ENCODE measurements at regions of chr13 and their contacts with region 1.

Region 1: DNA sequence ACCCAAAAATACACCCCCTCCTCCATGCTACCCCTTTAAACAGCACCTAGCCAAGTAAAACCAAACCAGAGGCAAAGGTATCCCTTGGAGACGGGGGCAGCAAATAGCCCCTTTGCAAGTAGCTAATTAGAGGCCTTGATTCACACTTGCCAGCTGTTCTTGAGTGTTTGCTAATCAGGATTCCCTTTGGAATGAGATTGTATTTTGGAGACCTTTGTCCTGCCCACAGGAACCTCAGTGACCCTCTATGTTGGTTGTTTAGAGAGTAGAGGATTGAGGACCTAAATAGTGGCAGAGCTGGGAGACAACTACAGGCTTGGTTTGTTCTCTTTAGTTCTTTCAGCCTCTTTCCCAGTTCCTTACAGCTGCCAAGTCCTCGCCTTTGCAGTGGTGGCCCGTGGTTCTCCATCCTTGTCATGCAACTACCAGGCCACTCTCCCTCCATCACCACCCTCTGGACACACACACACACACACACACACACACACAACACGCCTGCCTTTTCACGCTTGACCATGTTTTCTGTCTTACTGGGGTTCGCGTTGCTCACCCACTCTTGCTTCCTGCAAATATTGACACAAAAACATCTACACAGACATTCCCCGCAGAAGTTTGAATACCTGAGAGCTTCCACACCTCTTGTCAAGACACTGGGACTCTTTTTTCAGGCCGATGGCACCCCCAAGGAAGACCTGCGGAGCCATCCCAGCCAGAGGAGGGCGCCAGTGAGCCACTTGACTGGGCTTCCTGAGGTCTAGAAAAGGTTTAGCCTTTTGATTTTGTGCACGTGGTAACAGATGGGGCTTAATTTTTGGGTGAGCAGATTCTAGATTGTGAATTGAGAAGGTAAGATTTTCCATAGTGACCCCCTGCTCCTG is 80.0 kb upstream of the GPR183 start:
- DNase-seq: peak; percentile 78 to 84 (median 81)
- H3K4me3 ChIP-seq: no peak overlapping the region
- H3K4me3 Mint-ChIP-seq: peak overlapping the region; percentile 4 to 73 (median 54)
- H3K27ac ChIP-seq: peak overlapping the region; percentile 30
- H3K27ac Mint-ChIP-seq: peak overlapping the region; percentile 92 to 99 (median 96)
- H3K4me1 ChIP-seq: peaks cover 65% of the 10 kb centered on the region
- H3K4me1 Mint-ChIP-seq: peaks cover 46 to 70% (median 60%) of the 10 kb centered on the region in 4 donors
- H3K27me3 ChIP-seq: no peaks in the 10 kb centered on the region
- H3K27me3 Mint-ChIP-seq: no peaks in the 10 kb centered on the region

Region 2: GRCh38 chr13:99250982-99251825 is 135.9 kb before region 1 on chr13:
- CTCF ChIA-PET with region 1: no interaction called
- POLR2A ChIA-PET with region 1: no interaction called
- intact Hi-C with region 1: no loop called
- DNase-seq: no peak
- H3K4me3 ChIP-seq: no peak overlapping the region
- H3K4me3 Mint-ChIP-seq: peak overlapping the region in 5 of 8 donors; percentile 9 to 71 (median 36)
- H3K27ac ChIP-seq: no peak overlapping the region
- H3K27ac Mint-ChIP-seq: peak overlapping the region; percentile 63 to 87 (median 77)
- H3K4me1 ChIP-seq: peaks cover 37% of the 10 kb centered on the region
- H3K4me1 Mint-ChIP-seq: peaks cover 41 to 64% (median 50%) of the 10 kb centered on the region in 4 donors
- H3K27me3 ChIP-seq: no peaks in the 10 kb centered on the region
- H3K27me3 Mint-ChIP-seq: no peaks in the 10 kb centered on the region

Region 3: GRCh38 chr13:99281811-99282263 is 105.3 kb before region 1 on chr13:
- CTCF ChIA-PET with region 1: interaction called, 315 read pairs
- POLR2A ChIA-PET with region 1: interaction called, 22 read pairs
- intact Hi-C with region 1: no loop called
- DNase-seq: peak; percentile 65 to 79 (median 74)
- H3K4me3 ChIP-seq: peak overlapping the region in 1 of 2 donors; percentile 16
- H3K4me3 Mint-ChIP-seq: peak overlapping the region; percentile 67 to 92 (median 82)
- H3K27ac ChIP-seq: peak overlapping the region; percentile 66
- H3K27ac Mint-ChIP-seq: peak overlapping the region; percentile 88 to 100 (median 99)
- H3K4me1 ChIP-seq: peaks cover 96% of the 10 kb centered on the region
- H3K4me1 Mint-ChIP-seq: peaks cover 77 to 99% (median 88%) of the 10 kb centered on the region in 4 donors
- H3K27me3 ChIP-seq: no peaks in the 10 kb centered on the region
- H3K27me3 Mint-ChIP-seq: no peaks in the 10 kb centered on the region

Region 4: DNA sequence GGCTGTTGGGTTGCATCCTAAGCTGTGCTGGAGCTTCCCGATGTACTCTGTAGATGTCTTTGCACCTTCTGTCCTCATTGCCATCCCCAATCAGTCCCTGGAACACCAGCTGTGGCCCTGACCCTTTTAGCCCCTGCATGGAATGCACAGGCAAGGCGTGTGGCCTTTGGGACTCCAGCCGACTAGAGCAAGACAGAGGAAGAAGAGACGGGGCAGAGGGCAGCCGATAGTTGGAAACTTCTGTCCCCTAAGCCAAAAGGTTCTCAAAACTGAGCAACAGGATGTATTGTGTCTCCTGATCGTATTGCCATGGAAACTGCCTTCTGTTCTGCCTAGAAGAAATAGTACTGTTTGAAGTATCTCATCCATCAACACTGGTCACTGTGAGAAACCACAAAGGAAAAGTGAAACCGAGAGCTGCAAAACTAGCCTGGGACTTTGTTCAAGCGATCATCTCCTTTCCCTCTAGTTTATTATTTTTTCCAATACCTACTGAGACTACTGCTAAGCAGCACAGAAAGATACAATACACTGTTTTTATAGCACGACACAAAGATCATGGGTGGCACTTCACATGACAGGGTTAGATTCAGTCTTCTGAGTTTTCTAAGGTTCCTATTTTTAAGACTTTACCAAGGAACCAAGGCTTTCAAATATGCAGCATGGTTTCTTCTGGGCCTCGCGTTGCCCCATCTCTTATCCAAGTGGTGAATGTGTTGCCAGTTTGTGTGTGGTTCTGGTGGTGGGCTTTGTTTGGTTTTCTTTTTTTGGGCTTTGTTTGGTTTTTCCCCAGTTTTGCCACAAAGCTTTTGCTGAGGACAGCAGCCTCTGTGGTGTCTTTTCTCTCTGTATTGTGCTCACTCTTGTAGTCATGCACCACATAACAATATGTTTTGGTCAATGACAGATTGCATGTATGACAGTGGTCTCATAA is 30.7 kb before region 1 on chr13:
- CTCF ChIA-PET with region 1: interaction called, 39 read pairs
- POLR2A ChIA-PET with region 1: interaction called, 235 read pairs
- intact Hi-C with region 1: loop called (anchors 1 kb)
- DNase-seq: peak; percentile 88 to 95 (median 92)
- H3K4me3 ChIP-seq: peak overlapping the region; percentile 13 to 37
- H3K4me3 Mint-ChIP-seq: peak overlapping the region; percentile 30 to 82 (median 73)
- H3K27ac ChIP-seq: peak overlapping the region; percentile 94
- H3K27ac Mint-ChIP-seq: peak overlapping the region; percentile 96 to 100 (median 99)
- H3K4me1 ChIP-seq: peaks cover 98% of the 10 kb centered on the region
- H3K4me1 Mint-ChIP-seq: peaks cover 90 to 100% (median 96%) of the 10 kb centered on the region in 4 donors
- H3K27me3 ChIP-seq: no peaks in the 10 kb centered on the region
- H3K27me3 Mint-ChIP-seq: no peaks in the 10 kb centered on the region

Region 5: GRCh38 chr13:99374994-99375737 is 12.0 kb before region 1 on chr13:
- CTCF ChIA-PET with region 1: interaction called, 26 read pairs
- POLR2A ChIA-PET with region 1: interaction called, 75 read pairs
- intact Hi-C with region 1: no loop called
- DNase-seq: peak; percentile 73 to 89 (median 82)
- H3K4me3 ChIP-seq: peak overlapping the region in 1 of 2 donors; percentile 15
- H3K4me3 Mint-ChIP-seq: peak overlapping the region; percentile 61 to 77 (median 68)
- H3K27ac ChIP-seq: peak overlapping the region; percentile 39
- H3K27ac Mint-ChIP-seq: peak overlapping the region; percentile 96 to 100 (median 98)
- H3K4me1 ChIP-seq: peaks cover 85% of the 10 kb centered on the region
- H3K4me1 Mint-ChIP-seq: peaks cover 58 to 95% (median 79%) of the 10 kb centered on the region in 4 donors
- H3K27me3 ChIP-seq: no peaks in the 10 kb centered on the region
- H3K27me3 Mint-ChIP-seq: no peaks in the 10 kb centered on the region

Region 6: DNA sequence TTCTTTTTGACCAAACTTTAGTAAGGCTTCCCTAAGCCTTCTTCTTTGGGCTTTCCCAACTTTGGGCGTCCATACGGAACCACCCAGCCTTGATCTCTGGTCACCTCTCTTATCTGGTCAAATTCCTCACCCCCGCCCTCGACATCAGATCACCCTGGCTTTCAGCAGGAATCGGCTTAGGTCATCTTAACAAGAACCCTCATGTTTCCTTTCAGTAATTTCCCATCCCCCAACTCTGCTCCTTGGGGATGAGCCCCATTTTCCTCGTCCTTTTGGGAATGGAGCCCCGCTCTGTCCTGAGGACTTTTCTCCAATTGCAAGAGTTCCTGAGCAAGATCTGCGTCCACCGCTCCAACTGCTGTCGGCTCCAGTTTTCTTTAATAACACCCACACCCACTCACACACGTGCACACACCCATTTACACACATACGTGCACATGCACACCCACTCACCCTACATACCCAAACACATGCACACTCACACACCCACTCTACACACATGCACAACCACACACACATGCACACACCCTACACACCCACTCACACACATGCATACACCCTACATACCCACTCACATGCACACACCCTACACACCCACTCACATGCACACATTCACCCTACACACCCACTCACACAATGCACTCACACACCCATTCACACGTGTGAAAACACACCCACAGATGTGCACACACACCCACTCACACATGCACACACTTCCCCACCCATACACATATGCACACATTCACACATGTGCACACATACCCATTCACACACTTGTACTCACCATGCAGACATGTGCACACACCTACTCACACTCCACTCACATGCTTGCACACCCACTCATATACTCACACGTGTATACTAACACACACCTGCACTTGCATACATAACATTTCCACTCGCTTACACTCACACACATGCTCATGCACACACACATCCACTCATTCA is 27.2 kb after region 1 on chr13:
- CTCF ChIA-PET with region 1: interaction called, 49 read pairs
- POLR2A ChIA-PET with region 1: interaction called, 9 read pairs
- intact Hi-C with region 1: no loop called
- DNase-seq: no peak
- H3K4me3 ChIP-seq: no peak overlapping the region
- H3K4me3 Mint-ChIP-seq: no peak overlapping the region
- H3K27ac ChIP-seq: no peak overlapping the region
- H3K27ac Mint-ChIP-seq: no peak overlapping the region
- H3K4me1 ChIP-seq: peaks cover 15% of the 10 kb centered on the region
- H3K4me1 Mint-ChIP-seq: peaks cover 5 to 10% (median 8%) of the 10 kb centered on the region in 4 donors
- H3K27me3 ChIP-seq: no peaks in the 10 kb centered on the region
- H3K27me3 Mint-ChIP-seq: no peaks in the 10 kb centered on the region

Measured in CD4-positive, alpha-beta memory T cell (primary cell).